ENCODE measurements at regions of chr1 and their contacts with region 1.

Region 1: DNA sequence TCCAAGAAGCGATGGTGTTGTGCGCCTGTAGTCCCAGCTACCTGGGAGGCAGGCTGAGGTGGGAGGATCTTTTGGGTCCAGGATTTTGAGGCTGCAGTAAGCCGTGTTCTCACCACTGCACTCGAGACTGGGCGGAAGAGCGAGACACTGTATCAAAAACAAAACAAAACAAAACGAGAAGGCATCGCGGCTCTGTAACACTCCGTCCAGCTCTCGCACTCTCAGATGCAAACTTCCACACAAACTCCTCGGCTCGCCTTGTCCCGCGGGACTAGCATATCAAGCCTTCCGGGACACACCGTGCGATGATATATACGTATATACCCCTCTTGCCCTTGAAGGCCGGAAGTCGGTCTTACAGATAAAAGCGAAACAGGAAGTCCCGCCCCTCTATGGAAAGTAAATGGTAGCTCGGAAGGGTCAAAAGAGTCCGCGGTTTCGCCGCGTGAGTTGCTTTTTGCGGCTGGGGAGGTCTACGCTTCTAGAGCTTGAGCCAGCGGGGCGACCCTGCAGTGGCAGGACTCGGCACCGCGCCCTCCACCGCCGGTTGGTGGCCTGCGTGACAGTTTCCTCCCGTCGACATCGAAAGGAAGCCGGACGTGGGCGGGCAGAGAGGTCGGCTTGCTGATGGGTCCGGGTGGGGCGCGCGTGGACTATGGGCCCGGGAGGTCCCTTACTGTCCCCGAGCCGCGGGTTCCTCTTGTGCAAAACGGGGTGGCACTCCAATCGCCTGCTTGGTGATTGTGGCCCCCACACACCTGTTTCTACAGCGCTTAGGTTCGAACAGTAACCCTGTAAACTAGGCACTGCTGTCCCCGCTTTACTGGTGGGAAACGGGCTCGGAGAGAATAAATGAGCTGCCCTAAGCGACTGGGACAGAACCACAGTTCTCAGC is at the start of gene COA6:
- DNase-seq: peak; percentile 76 to 92 (median 90)
- ATAC-seq: peak; percentile 91
- H3K4me3 ChIP-seq: peak within 1 kb of the TSS; percentile 73
- H3K4me3 Mint-ChIP-seq: peak within 1 kb of the TSS; percentile 93 to 100 (median 97)
- H3K27ac ChIP-seq: peak within 1 kb of the TSS; percentile 95
- H3K27ac Mint-ChIP-seq: peak within 1 kb of the TSS; percentile 97 to 100 (median 99)
- H3K4me1 ChIP-seq: peaks cover 12 to 16% of the 10 kb centered on the region in 2 donors
- H3K4me1 Mint-ChIP-seq: peaks cover 30 to 66% (median 63%) of the 10 kb centered on the region in 7 donors
- H3K27me3 ChIP-seq: no peaks in the 10 kb centered on the region
- H3K27me3 Mint-ChIP-seq: no peaks in the 10 kb centered on the region
- total RNA-seq, gene COA6: 9.5 to 47.3 (median 18.5) TPM

Region 2: DNA sequence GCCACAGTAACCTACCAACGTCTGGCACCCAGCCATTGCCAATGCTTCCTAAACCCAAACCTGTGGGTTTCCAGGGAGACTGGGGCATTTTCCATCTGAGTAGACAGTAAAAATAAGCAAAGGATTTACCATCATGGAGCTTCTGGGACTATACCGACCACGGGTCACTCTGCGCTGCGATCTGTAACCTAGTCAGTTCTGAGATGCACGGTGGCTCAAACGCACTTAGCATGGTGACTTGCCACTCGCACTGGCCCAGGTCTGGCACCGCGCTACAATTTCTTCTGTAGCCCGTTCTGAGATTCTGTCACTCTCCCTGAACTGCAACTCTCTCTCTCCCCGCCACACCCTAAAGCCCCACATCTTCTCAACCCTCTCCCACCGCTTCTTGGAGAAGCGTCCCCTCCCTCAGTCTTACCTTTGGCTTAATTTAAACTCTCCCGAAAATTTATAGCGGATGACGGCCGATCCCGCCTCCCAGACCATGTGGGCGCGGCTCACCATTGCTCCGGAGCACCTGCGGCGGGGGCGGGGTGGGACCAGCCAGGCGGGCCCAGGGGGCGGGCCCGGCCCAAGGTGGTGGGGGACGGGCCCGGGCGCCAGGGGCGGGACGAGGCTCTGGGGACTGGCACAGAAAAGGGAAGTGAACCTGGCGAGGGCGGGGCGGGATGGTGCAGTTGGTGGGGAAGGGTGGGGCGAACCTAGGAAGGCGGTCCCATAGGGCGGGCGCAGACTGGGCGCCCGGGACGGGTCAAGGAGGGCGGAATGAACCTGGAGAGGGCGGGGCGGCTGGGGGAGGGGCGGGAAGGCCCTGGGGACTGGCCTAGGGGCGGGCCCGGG is 1046.3 kb before region 1 on chr1:
- CTCF ChIA-PET with region 1: no interaction called
- POLR2A ChIA-PET with region 1: no interaction called
- intact Hi-C with region 1: loop called in 1 of 2 experiments (anchors 2 kb)
- DNase-seq: peak; percentile 61 to 79 (median 74)
- ATAC-seq: peak; percentile 93
- H3K4me3 ChIP-seq: peak overlapping the region; percentile 43
- H3K4me3 Mint-ChIP-seq: peak overlapping the region; percentile 67 to 89 (median 83)
- H3K27ac ChIP-seq: no peak overlapping the region
- H3K27ac Mint-ChIP-seq: peak overlapping the region in 4 of 9 donors; percentile 8 to 83 (median 38)
- H3K4me1 ChIP-seq: peaks cover 6 to 8% of the 10 kb centered on the region in 2 donors
- H3K4me1 Mint-ChIP-seq: peaks cover 4 to 19% (median 8%) of the 10 kb centered on the region in 7 donors
- H3K27me3 ChIP-seq: no peaks in the 10 kb centered on the region
- H3K27me3 Mint-ChIP-seq: peaks cover 4 to 52% (median 13%) of the 10 kb centered on the region in 5 donors

Region 3: GRCh38 chr1:234355782-234356510 is 17.4 kb before region 1 on chr1:
- CTCF ChIA-PET with region 1: no interaction called
- POLR2A ChIA-PET with region 1: interaction called, 22 read pairs
- intact Hi-C with region 1: loop called (anchors 1 kb)
- DNase-seq: no peak
- ATAC-seq: no peak
- H3K4me3 ChIP-seq: peak overlapping the region; percentile 60
- H3K4me3 Mint-ChIP-seq: peak overlapping the region in 6 of 10 donors; percentile 52 to 90 (median 78)
- H3K27ac ChIP-seq: no peak overlapping the region
- H3K27ac Mint-ChIP-seq: peak overlapping the region in 6 of 9 donors; percentile 35 to 92 (median 88)
- H3K4me1 ChIP-seq: peaks cover 0 to 6% of the 10 kb centered on the region in 2 donors
- H3K4me1 Mint-ChIP-seq: peaks cover 0 to 23% (median 15%) of the 10 kb centered on the region in 7 donors
- H3K27me3 ChIP-seq: no peaks in the 10 kb centered on the region
- H3K27me3 Mint-ChIP-seq: peaks cover 0 to 32% (median 5%) of the 10 kb centered on the region in 5 donors

Region 4: GRCh38 chr1:234386122-234386521 is 12.8 kb after region 1 on chr1:
- CTCF ChIA-PET with region 1: interaction called, 3 read pairs
- POLR2A ChIA-PET with region 1: interaction called, 19 read pairs
- intact Hi-C with region 1: no loop called
- DNase-seq: no peak
- ATAC-seq: no peak
- H3K4me3 ChIP-seq: no peak overlapping the region
- H3K4me3 Mint-ChIP-seq: peak overlapping the region in 1 of 10 donors; percentile 35
- H3K27ac ChIP-seq: no peak overlapping the region
- H3K27ac Mint-ChIP-seq: peak overlapping the region in 5 of 9 donors; percentile 12 to 55 (median 38)
- H3K4me1 ChIP-seq: no peaks in the 10 kb centered on the region
- H3K4me1 Mint-ChIP-seq: peaks cover 6 to 21% (median 13%) of the 10 kb centered on the region in 7 donors
- H3K27me3 ChIP-seq: no peaks in the 10 kb centered on the region
- H3K27me3 Mint-ChIP-seq: no peaks in the 10 kb centered on the region

Region 5: GRCh38 chr1:234398849-234399381 is 25.6 kb after region 1 on chr1:
- CTCF ChIA-PET with region 1: no interaction called
- POLR2A ChIA-PET with region 1: interaction called, 124 read pairs
- intact Hi-C with region 1: loop called (anchors 1 to 2 kb)
- DNase-seq: no peak
- ATAC-seq: peak; percentile 68
- H3K4me3 ChIP-seq: peak overlapping the region; percentile 2
- H3K4me3 Mint-ChIP-seq: peak overlapping the region; percentile 30 to 89 (median 80)
- H3K27ac ChIP-seq: peak overlapping the region; percentile 61
- H3K27ac Mint-ChIP-seq: peak overlapping the region; percentile 86 to 97 (median 92)
- H3K4me1 ChIP-seq: peaks cover 11 to 25% of the 10 kb centered on the region in 2 donors
- H3K4me1 Mint-ChIP-seq: peaks cover 41 to 79% (median 63%) of the 10 kb centered on the region in 7 donors
- H3K27me3 ChIP-seq: no peaks in the 10 kb centered on the region
- H3K27me3 Mint-ChIP-seq: no peaks in the 10 kb centered on the region

Region 6: GRCh38 chr1:234478481-234479309 is 105.4 kb after region 1 on chr1 and contains the start of gene TARBP1:
- CTCF ChIA-PET with region 1: no interaction called
- POLR2A ChIA-PET with region 1: interaction called, 19 read pairs
- intact Hi-C with region 1: loop called (anchors 1 to 2 kb)
- DNase-seq: peak; percentile 68 to 87 (median 83)
- ATAC-seq: peak; percentile 82
- H3K4me3 ChIP-seq: peak within 1 kb of the TSS; percentile 79
- H3K4me3 Mint-ChIP-seq: peak within 1 kb of the TSS; percentile 82 to 90 (median 90)
- H3K27ac ChIP-seq: peak within 1 kb of the TSS; percentile 75
- H3K27ac Mint-ChIP-seq: peak within 1 kb of the TSS; percentile 73 to 95 (median 85)
- H3K4me1 ChIP-seq: peaks cover 0 to 16% of the 10 kb centered on the region in 2 donors
- H3K4me1 Mint-ChIP-seq: peaks cover 14 to 44% (median 39%) of the 10 kb centered on the region in 7 donors
- H3K27me3 ChIP-seq: no peaks in the 10 kb centered on the region
- H3K27me3 Mint-ChIP-seq: peaks cover 0 to 19% (median 3%) of the 10 kb centered on the region in 5 donors
- total RNA-seq, gene TARBP1: 45.8 to 49.6 (median 47.5) TPM

Region 7: GRCh38 chr1:235160957-235161684 is 787.8 kb after region 1 on chr1 and contains the start of gene RBM34:
- CTCF ChIA-PET with region 1: no interaction called
- POLR2A ChIA-PET with region 1: interaction called, 8 read pairs
- intact Hi-C with region 1: loop called in 1 of 2 experiments (anchors 2 kb)
- DNase-seq: peak; percentile 87 to 95 (median 91)
- ATAC-seq: peak; percentile 96
- H3K4me3 ChIP-seq: peak within 1 kb of the TSS; percentile 92
- H3K4me3 Mint-ChIP-seq: peak within 1 kb of the TSS in 8 of 10 donors; percentile 96 to 100 (median 98)
- H3K27ac ChIP-seq: peak within 1 kb of the TSS; percentile 86
- H3K27ac Mint-ChIP-seq: peak within 1 kb of the TSS; percentile 97 to 100 (median 99)
- H3K4me1 ChIP-seq: peaks cover 30 to 33% of the 10 kb centered on the region in 2 donors
- H3K4me1 Mint-ChIP-seq: peaks cover 8 to 30% (median 17%) of the 10 kb centered on the region in 7 donors
- H3K27me3 ChIP-seq: no peaks in the 10 kb centered on the region
- H3K27me3 Mint-ChIP-seq: no peaks in the 10 kb centered on the region
- total RNA-seq, gene RBM34: 105 to 171 (median 137) TPM